ENCODE measurements at regions of chr4 and their contacts with region 1.

Region 1: GRCh38 chr4:16225863-16226815 is at the start of gene TAPT1:
- DNase-seq: peak; percentile 89
- ATAC-seq: peak; percentile 80
- H3K4me3 Mint-ChIP-seq: peak within 1 kb of the TSS; percentile 90
- H3K27ac Mint-ChIP-seq: peak within 1 kb of the TSS; percentile 98
- H3K4me1 Mint-ChIP-seq: peaks cover 56% of the 10 kb centered on the region
- H3K27me3 Mint-ChIP-seq: no peaks in the 10 kb centered on the region
- total RNA-seq, gene TAPT1: 32.6 to 34.4 TPM

Region 2: GRCh38 chr4:15655229-15656037 is 570.7 kb before region 1 on chr4 and contains the start of gene FBXL5:
- CTCF ChIA-PET with region 1: no interaction called
- POLR2A ChIA-PET with region 1: no interaction called
- intact Hi-C with region 1: loop called (anchors 2 to 10 kb)
- DNase-seq: peak; percentile 90
- ATAC-seq: peak; percentile 76
- H3K4me3 Mint-ChIP-seq: peak within 1 kb of the TSS; percentile 99
- H3K27ac Mint-ChIP-seq: peak within 1 kb of the TSS; percentile 97
- H3K4me1 Mint-ChIP-seq: peaks cover 57% of the 10 kb centered on the region
- H3K27me3 Mint-ChIP-seq: no peaks in the 10 kb centered on the region
- total RNA-seq, gene FBXL5: 20.1 to 29.1 TPM

Region 3: DNA sequence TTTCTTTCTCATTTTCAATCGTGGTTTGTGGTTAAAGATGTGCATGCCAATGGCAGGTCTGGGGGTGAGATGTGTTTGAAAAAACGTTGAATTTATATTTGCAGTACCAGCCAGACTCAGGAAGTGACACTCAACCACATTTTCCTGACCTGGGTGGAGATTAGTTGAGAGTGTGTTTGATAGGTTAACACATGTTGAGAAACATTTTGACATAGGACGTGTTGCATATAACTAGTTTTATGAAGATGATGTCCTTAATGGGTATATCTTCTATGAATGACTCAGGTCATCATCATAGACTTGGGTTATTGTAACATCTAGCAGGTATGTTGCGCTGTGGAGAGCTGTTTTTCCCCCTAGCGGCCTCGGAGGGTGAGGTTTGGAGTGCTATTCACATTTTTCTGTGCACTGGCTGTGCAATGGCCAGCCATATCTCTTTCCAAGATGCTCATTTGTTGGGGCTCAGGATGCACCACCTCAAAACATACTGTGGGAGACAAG is 469.7 kb before region 1 on chr4:
- CTCF ChIA-PET with region 1: no interaction called
- POLR2A ChIA-PET with region 1: no interaction called
- intact Hi-C with region 1: loop called in 1 of 2 experiments (anchors 1 kb)
- DNase-seq: peak; percentile 87
- ATAC-seq: peak; percentile 82
- H3K4me3 Mint-ChIP-seq: peak overlapping the region; percentile 60
- H3K27ac Mint-ChIP-seq: peak overlapping the region; percentile 96
- H3K4me1 Mint-ChIP-seq: peaks cover 45% of the 10 kb centered on the region
- H3K27me3 Mint-ChIP-seq: no peaks in the 10 kb centered on the region

Region 4: DNA sequence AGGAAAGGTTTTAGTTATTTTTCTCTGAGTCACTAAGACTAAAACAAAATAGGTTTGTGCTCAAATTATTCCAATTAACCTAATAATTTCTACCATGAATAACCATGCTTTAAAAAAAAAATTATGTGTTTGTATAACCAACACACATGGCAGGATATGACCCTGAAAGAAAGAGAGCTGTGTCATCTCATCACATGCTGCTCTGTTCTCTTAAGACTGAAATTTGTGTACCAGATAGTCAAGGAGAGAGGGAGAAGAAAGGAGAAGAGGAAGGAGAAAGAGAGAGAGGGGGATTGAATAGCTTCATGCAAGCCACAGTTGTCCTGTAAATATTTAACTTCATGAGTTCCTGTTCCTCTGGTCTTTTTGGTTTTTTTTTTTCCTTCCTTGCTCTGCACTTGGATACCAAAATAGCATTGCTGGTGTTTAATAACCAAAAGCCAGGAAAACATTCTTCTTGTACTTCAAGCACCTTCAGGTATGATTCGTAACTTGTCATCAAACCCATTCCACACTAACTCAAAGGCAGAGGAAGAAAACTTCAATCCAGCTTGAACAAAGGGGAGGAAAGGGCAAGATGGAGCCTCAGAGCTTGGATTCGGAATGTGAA is 135.9 kb before region 1 on chr4:
- CTCF ChIA-PET with region 1: no interaction called
- POLR2A ChIA-PET with region 1: no interaction called
- intact Hi-C with region 1: no loop called
- DNase-seq: no peak
- ATAC-seq: no peak
- H3K4me3 Mint-ChIP-seq: no peak overlapping the region
- H3K27ac Mint-ChIP-seq: no peak overlapping the region
- H3K4me1 Mint-ChIP-seq: no peaks in the 10 kb centered on the region
- H3K27me3 Mint-ChIP-seq: peaks cover 45% of the 10 kb centered on the region

Region 5: GRCh38 chr4:16205298-16206164 is 20.6 kb before region 1 on chr4:
- CTCF ChIA-PET with region 1: interaction called, 18 read pairs
- POLR2A ChIA-PET with region 1: interaction called, 3 read pairs
- intact Hi-C with region 1: no loop called
- DNase-seq: no peak
- ATAC-seq: peak; percentile 68
- H3K4me3 Mint-ChIP-seq: no peak overlapping the region
- H3K27ac Mint-ChIP-seq: peak overlapping the region; percentile 16
- H3K4me1 Mint-ChIP-seq: peaks cover 51% of the 10 kb centered on the region
- H3K27me3 Mint-ChIP-seq: no peaks in the 10 kb centered on the region

Region 6: GRCh38 chr4:17336524-17336961 is 1110.4 kb after region 1 on chr4:
- CTCF ChIA-PET with region 1: no interaction called
- POLR2A ChIA-PET with region 1: no interaction called
- intact Hi-C with region 1: loop called (anchors 5 kb)
- DNase-seq: peak; percentile 86
- ATAC-seq: peak; percentile 93
- H3K4me3 Mint-ChIP-seq: peak overlapping the region; percentile 54
- H3K27ac Mint-ChIP-seq: peak overlapping the region; percentile 92
- H3K4me1 Mint-ChIP-seq: peaks cover 45% of the 10 kb centered on the region
- H3K27me3 Mint-ChIP-seq: no peaks in the 10 kb centered on the region

Region 7: DNA sequence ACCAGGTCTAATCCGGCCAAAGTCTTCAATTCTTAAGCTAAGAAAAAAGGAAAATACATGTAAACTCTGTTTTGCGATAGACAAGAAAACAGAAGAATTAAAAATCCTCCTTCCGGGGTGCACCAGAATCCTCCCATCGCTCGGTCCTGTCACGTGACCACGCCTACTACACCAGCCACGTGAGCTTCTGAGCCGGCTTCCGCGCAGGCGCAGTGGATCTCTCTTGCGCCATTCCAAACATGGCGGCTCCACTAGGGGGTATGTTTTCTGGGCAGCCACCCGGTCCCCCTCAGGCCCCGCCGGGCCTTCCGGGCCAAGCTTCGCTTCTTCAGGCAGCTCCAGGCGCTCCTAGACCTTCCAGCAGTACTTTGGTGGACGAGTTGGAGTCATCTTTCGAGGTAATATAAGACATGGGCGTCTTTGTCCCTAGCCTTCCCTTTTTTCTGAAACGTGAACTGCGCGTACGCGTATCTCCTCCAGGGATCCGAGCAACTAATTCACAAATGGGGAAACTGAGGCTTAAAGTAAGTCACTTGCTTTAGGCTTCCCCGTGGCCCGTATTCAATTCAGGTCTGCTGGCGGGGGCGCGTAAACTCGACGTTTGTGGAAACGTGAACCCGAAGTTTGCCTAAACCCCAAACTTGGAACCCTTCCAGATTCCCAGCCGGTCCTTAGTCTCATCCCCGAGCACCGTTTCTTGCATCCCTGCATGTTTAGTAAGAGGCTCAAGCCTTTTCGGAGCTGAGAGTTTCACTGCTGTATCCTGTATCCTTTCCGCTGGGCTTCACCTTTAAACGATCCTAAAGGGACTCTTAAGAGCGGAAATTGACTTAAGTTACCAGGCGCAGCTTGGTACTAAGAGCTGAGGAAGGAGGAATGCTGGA is 1388.5 kb after region 1 on chr4 and contains the start of gene MED28:
- CTCF ChIA-PET with region 1: no interaction called
- POLR2A ChIA-PET with region 1: no interaction called
- intact Hi-C with region 1: loop called in 1 of 2 experiments (anchors 10 kb)
- DNase-seq: peak; percentile 98
- ATAC-seq: peak; percentile 89
- H3K4me3 Mint-ChIP-seq: peak within 1 kb of the TSS; percentile 98
- H3K27ac Mint-ChIP-seq: peak within 1 kb of the TSS; percentile 97
- H3K4me1 Mint-ChIP-seq: peaks cover 45% of the 10 kb centered on the region
- H3K27me3 Mint-ChIP-seq: no peaks in the 10 kb centered on the region
- total RNA-seq, gene MED28: 43.0 to 58.0 TPM

Region 8: GRCh38 chr4:18021722-18022571 is 1795.8 kb after region 1 on chr4 and contains the start of gene LCORL:
- CTCF ChIA-PET with region 1: no interaction called
- POLR2A ChIA-PET with region 1: no interaction called
- intact Hi-C with region 1: loop called in 1 of 2 experiments (anchors 5 kb)
- DNase-seq: peak; percentile 91
- ATAC-seq: peak; percentile 88
- H3K4me3 Mint-ChIP-seq: peak within 1 kb of the TSS; percentile 98
- H3K27ac Mint-ChIP-seq: peak within 1 kb of the TSS; percentile 91
- H3K4me1 Mint-ChIP-seq: peaks cover 13% of the 10 kb centered on the region
- H3K27me3 Mint-ChIP-seq: peaks cover 25% of the 10 kb centered on the region
- total RNA-seq, gene LCORL: 6.7 to 8.0 TPM